Thyroid gland (tissue), 4 donors: ENCODE measurements at regions of chr7 and their contacts with region 1.

Region 1: GRCh38 chr7:99990460-99990852 is 14.6 kb upstream of the AZGP1 start:
- DNase-seq: no peak
- H3K4me3 ChIP-seq: no peak overlapping the region
- H3K27ac ChIP-seq: no peak overlapping the region
- H3K4me1 ChIP-seq: peaks cover 0 to 5% of the 10 kb centered on the region in 2 donors
- H3K27me3 ChIP-seq: no peaks in the 10 kb centered on the region
- CTCF ChIP-seq: no peak
- POLR2A ChIP-seq: no peak

Region 2: DNA sequence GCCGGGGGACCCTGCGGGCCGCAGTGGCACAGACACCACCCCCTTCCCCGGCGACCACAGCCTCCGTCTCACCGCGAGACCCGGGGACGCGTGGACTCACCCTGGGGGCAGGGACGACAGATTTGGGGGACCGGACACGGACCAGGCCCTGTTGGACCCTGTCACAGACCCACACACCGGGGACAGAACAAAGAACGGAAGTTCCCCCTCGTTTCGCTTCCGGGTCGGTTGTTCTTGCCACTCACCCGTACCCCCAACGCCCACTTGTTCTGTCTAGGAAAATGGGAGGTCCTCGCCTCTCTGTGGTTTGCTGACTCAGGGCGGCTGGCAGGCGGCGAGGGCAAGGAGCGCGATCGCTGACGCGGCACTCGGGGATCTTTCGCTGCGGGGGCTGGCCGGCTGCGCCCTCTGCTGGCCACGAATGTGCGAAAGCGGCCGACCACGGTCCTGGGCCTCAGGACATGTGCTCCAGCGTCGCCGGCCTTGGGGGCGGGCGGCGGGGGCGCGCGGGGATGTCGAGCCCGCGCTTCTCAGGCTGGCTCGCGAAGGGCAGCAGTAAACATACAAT is 91.2 kb after region 1 on chr7 and contains the start of gene ZNF3:
- intact Hi-C with region 1: loop called (anchors 5 kb)
- DNase-seq: peak; percentile 99
- H3K4me3 ChIP-seq: peak within 1 kb of the TSS; percentile 66 to 87 (median 85)
- H3K27ac ChIP-seq: peak within 1 kb of the TSS; percentile 83 to 89 (median 85)
- H3K4me1 ChIP-seq: peaks cover 21 to 26% of the 10 kb centered on the region in 2 donors
- H3K27me3 ChIP-seq: no peaks in the 10 kb centered on the region
- CTCF ChIP-seq: peak; percentile 65 to 97 (median 89)
- POLR2A ChIP-seq: peak in 1 of 2 donors; percentile 54
- total RNA-seq, gene ZNF3: 31.4 to 42.3 (median 36.1) TPM